ENCODE measurements at regions of chr20 and their contacts with region 1.

Region 1: DNA sequence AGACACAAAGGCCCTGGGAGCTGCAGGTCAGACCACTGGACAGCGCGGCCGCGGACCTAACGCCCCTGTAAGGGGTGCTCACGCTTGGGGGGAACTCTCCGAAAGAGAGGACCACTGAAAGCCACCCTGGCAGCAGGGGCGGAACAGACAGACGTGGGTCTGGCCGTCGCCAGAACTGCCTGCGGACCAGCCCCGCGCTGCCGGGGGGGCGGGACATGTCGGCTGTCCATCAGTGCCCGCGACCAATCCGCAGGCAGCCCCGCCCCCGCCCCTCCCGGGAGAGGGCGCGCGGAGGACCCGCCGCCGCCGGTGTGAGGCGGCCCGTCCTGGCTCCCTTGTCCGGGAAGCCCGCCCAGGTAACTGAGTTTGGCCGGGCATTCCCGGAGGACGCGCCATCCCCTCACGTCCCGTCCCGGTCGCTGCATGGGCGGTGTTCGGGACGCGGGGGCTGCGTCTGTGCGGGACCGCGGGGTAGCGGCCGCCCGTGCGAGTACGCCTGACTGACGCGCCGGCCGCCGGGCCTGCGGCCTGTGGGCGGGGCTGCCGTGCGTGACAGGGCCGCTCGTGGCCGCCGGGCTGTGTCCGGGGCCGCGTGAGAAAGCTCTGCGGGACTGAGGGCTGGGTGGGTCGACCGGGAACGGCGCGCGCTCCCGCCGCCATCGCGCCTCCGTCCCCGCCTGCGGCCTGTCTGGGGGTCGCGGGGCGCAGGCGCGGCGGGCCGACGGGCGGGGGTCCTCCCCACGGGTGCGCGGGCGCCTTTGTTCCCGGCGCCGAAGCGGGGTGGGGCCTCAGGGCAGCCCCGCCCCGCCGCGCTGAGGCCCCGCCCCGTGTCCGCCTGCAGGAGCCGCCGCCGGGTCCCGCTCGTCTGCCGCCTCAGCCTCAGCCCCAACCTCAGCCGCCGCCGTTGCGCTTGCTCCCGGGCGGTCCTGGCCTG is at the start of gene PLCG1:
- DNase-seq: peak; percentile 85
- H3K4me3 Mint-ChIP-seq: peak within 1 kb of the TSS; percentile 87
- H3K27ac Mint-ChIP-seq: peak within 1 kb of the TSS; percentile 89
- H3K4me1 Mint-ChIP-seq: peaks cover 58% of the 10 kb centered on the region
- H3K27me3 Mint-ChIP-seq: no peaks in the 10 kb centered on the region
- total RNA-seq, gene PLCG1: 395 to 443 TPM

Region 2: DNA sequence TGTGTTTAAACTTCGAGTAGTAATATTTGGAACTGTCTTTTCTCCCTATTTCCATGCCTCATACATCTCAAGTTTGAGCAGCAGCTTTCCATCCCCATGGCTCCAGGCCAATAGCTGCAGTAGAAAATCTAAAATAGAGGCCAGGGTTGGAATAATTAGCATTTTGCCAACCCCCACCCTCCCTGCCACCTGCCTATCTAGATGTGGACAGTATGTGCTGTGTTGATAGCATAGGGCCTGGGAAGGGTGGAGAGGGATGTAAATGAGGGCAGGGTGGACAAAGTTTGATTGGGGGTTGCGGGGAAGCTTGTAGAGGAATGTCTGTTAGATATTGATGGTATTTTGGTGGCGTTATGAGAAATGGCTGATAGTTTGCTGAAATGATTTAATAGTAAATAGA is 102.7 kb before region 1 on chr20:
- CTCF ChIA-PET with region 1: no interaction called
- POLR2A ChIA-PET with region 1: no interaction called
- DNase-seq: no peak
- H3K4me3 Mint-ChIP-seq: no peak overlapping the region
- H3K27ac Mint-ChIP-seq: no peak overlapping the region
- H3K4me1 Mint-ChIP-seq: peaks cover 83% of the 10 kb centered on the region
- H3K27me3 Mint-ChIP-seq: no peaks in the 10 kb centered on the region

Region 3: GRCh38 chr20:41057999-41058896 is 78.7 kb before region 1 on chr20:
- CTCF ChIA-PET with region 1: no interaction called
- POLR2A ChIA-PET with region 1: no interaction called
- DNase-seq: no peak
- H3K4me3 Mint-ChIP-seq: no peak overlapping the region
- H3K27ac Mint-ChIP-seq: no peak overlapping the region
- H3K4me1 Mint-ChIP-seq: peaks cover 39% of the 10 kb centered on the region
- H3K27me3 Mint-ChIP-seq: no peaks in the 10 kb centered on the region

Region 4: DNA sequence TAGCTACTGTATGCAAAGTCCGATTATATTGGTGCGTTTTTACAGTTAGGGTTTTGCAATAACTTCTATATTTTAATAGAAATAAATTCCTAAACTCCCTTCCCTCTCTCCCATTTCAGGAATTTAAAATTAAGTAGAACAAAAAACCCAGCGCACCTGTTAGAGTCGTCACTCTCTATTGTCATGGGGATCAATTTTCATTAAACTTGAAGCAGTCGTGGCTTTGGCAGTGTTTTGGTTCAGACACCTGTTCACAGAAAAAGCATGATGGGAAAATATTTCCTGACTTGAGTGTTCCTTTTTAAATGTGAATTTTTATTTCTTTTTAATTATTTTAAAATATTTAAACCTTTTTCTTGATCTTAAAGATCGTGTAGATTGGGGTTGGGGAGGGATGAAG is 13.3 kb before region 1 on chr20:
- CTCF ChIA-PET with region 1: interaction called, 22 read pairs
- POLR2A ChIA-PET with region 1: no interaction called
- DNase-seq: no peak
- H3K4me3 Mint-ChIP-seq: no peak overlapping the region
- H3K27ac Mint-ChIP-seq: no peak overlapping the region
- H3K4me1 Mint-ChIP-seq: peaks cover 19% of the 10 kb centered on the region
- H3K27me3 Mint-ChIP-seq: no peaks in the 10 kb centered on the region

Region 5: DNA sequence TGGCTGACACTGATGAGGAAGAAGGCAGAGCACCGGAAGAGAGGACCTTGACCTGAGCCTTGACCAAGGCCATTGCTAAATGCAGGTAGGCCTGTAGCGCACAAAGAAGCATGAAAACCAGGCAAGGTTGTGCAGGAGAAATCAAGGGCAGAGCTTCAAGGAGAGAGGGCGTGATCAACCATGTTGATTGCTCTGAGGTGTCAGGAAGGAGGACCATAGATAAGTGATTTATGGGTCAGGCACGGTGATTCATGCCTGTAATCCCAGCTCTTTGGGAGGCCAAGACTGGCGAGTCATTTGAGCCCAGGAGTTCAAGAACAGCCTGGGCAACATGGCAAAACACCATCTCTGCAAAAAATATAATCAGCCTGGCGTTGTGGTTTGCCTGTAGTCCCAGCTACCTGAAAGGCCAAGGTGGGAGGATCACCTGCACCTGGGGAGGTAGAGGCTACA is 12.8 kb after region 1 on chr20:
- CTCF ChIA-PET with region 1: interaction called, 139 read pairs
- POLR2A ChIA-PET with region 1: interaction called, 3 read pairs
- DNase-seq: no peak
- H3K4me3 Mint-ChIP-seq: no peak overlapping the region
- H3K27ac Mint-ChIP-seq: peak overlapping the region; percentile 94
- H3K4me1 Mint-ChIP-seq: peaks cover 95% of the 10 kb centered on the region
- H3K27me3 Mint-ChIP-seq: no peaks in the 10 kb centered on the region

Region 6: DNA sequence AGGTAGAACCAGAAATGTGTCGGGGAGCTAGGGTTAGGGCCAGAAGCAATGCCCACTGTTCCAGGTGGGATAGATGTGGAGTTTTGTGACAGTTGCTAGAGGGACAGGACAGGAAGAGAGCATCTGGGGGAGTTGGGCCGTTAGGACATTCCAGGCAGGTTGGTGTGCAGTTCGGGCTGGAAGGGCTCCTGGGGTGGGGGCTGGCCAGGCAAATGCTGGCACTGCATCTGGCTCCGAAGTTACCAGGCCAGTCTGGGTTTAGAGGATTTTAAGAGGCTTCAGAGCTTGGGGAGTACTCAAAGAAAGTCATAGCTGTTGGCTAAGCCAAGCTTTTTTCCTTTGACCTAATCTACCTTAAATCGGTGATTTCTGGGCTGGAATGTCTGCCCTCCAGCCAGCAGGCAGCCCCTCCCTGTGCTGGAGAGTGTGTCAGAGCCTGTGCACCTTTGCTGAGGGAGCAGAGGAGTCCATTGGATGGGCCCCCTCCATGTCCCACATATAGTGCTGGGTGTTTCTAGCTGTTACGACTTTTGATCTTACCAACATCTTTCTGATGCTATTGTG is 21.2 kb after region 1 on chr20:
- CTCF ChIA-PET with region 1: interaction called, 139 read pairs
- POLR2A ChIA-PET with region 1: interaction called, 11 read pairs
- DNase-seq: no peak
- H3K4me3 Mint-ChIP-seq: peak overlapping the region; percentile 75
- H3K27ac Mint-ChIP-seq: peak overlapping the region; percentile 97
- H3K4me1 Mint-ChIP-seq: peaks cover 87% of the 10 kb centered on the region
- H3K27me3 Mint-ChIP-seq: no peaks in the 10 kb centered on the region

Region 7: GRCh38 chr20:41232973-41233926 is 96.3 kb after region 1 on chr20:
- CTCF ChIA-PET with region 1: interaction called, 18 read pairs
- POLR2A ChIA-PET with region 1: no interaction called
- DNase-seq: no peak
- H3K4me3 Mint-ChIP-seq: no peak overlapping the region
- H3K27ac Mint-ChIP-seq: no peak overlapping the region
- H3K4me1 Mint-ChIP-seq: peaks cover 34% of the 10 kb centered on the region
- H3K27me3 Mint-ChIP-seq: no peaks in the 10 kb centered on the region

Region 8: DNA sequence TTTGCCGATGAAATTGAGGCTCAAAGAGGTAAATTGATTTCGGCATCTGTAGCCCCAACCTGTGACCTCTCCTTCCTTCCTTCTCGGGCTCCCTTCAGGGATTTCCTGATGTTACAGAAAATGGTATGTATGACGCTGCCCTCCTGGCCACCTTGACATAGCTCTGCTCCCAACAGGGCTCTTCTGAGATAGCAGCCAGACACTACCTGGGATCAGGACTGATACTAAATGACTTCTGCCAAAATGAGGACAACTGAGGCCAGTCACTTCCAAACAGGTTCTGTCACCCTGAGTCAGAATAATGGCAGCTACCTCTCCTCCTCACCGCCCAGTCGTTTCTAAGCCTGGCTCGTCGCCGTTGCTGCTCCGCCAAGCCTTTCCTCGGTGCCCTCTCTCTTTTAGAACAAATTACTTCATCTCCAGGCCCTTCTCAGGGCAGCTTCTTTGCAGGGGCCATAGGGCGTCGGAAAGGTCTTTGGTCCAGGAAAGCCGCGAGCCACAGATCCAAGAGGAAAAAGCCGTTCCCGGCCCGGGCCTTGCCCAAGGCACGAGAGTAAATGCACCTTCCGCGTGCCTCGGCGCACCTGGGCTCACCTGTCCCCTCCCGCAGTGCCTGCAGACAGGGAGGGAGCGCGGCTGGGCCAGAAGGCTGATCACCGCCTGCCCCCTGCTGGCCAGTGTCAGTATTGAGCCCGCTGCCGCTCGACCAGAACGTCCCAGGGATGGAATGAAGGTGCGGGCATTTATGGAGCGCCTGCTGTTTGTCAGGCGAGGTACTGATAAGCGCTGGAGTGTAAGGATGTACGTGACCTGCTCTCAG is 202.8 kb after region 1 on chr20:
- CTCF ChIA-PET with region 1: interaction called, 24 read pairs
- POLR2A ChIA-PET with region 1: no interaction called
- DNase-seq: peak; percentile 84
- H3K4me3 Mint-ChIP-seq: peak overlapping the region; percentile 74
- H3K27ac Mint-ChIP-seq: peak overlapping the region; percentile 69
- H3K4me1 Mint-ChIP-seq: peaks cover 18% of the 10 kb centered on the region
- H3K27me3 Mint-ChIP-seq: peaks cover 9% of the 10 kb centered on the region

Measured in activated CD4-positive, alpha-beta T cell treated with anti-CD3 and anti-CD28 coated beads, Interleukin-2, amount 10 ng/mL, durations not matched to agents 7 days and 5 days (primary cell).